Activated CD4-positive, alpha-beta T cell treated with anti-CD3 and anti-CD28 coated beads, Interleukin-2, amount 10 ng/mL, durations not matched to agents 7 days and 5 days (primary cell): ENCODE measurements at regions of chr1 and their contacts with region 1.

Region 1: DNA sequence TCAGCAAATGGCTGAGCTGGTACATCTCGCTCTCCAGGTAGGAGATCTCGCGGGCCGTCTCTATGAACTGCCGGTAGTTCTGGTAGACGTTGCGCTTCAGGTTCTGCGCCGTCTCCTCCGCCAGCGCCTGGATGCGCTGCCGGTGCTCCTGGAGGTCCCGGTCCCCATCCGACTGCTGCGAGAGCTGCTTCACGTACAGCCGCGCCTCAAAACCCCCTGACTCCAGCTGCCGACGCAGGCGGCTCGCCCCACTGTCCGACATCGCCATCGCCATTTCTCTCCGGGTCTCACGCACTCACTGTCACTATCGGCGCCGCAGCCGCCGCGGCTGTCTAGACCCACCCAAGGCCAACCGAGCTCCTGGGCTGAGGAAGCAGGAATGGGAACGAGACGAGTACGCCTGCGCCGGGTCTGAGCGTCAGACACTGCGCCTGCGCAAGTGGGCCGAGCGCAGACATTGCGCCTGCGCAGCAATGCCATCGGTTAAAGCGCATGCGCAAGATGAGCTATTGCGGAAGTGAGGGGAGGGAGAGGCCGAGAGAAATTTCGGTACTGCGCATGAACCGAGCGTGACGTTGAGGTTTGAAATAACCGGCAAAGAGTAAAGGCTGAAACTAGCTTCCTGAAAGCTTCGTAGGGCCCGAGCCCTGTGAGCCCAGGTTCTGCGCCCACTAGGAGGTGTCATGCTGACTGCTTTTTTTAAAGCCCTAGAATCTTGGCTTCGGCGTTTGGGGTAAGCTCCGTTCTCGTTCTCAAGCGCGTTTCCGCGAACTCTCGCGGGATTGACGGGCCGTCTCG is at the start of gene EXOC8:
- DNase-seq: peak; percentile 97
- H3K4me3 Mint-ChIP-seq: peak within 1 kb of the TSS; percentile 98
- H3K27ac Mint-ChIP-seq: peak within 1 kb of the TSS; percentile 99
- H3K4me1 Mint-ChIP-seq: peaks cover 61% of the 10 kb centered on the region
- H3K27me3 Mint-ChIP-seq: no peaks in the 10 kb centered on the region
- total RNA-seq, gene EXOC8: 20.6 to 21.9 TPM

Region 2: DNA sequence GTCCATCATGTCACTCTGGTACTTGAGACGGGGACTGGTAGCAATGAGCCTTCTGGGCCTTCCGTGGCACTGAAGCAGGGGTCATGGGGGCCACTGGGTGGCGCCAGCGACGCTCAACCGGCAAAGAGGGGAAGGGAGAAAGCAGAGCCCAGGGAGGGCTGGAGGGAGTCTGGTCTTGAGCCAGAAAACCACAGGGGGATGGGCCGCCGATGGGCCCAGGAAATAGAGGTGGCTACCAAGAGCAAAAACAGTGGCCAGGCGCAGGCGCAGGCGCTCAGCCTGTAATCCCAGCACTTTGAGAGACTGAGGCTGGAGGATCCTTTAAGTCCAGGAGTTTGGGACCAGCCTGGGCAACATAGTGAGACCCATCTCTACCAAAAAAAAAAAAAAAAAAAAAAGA is 21.8 kb before region 1 on chr1:
- CTCF ChIA-PET with region 1: interaction called, 14 read pairs
- POLR2A ChIA-PET with region 1: no interaction called
- DNase-seq: peak; percentile 39
- H3K4me3 Mint-ChIP-seq: no peak overlapping the region
- H3K27ac Mint-ChIP-seq: no peak overlapping the region
- H3K4me1 Mint-ChIP-seq: peaks cover 3% of the 10 kb centered on the region
- H3K27me3 Mint-ChIP-seq: peaks cover 2% of the 10 kb centered on the region

Region 3: GRCh38 chr1:231351816-231352215 is 14.1 kb after region 1 on chr1:
- CTCF ChIA-PET with region 1: interaction called, 13 read pairs
- POLR2A ChIA-PET with region 1: no interaction called
- DNase-seq: no peak
- H3K4me3 Mint-ChIP-seq: no peak overlapping the region
- H3K27ac Mint-ChIP-seq: no peak overlapping the region
- H3K4me1 Mint-ChIP-seq: no peaks in the 10 kb centered on the region
- H3K27me3 Mint-ChIP-seq: no peaks in the 10 kb centered on the region